GM12878 (cell line): ENCODE measurements at regions of chr3 and their contacts with region 1.

Region 1: GRCh38 chr3:133805527-133806475 is at the start of gene SRPRB:
- DNase-seq: peak; percentile 87
- ATAC-seq: peak; percentile 98
- H3K4me3 ChIP-seq: peak within 1 kb of the TSS; percentile 74
- H3K27ac ChIP-seq: peak within 1 kb of the TSS; percentile 60
- H3K4me1 ChIP-seq: no peaks in the 10 kb centered on the region
- H3K27me3 ChIP-seq: no peaks in the 10 kb centered on the region
- CTCF ChIP-seq: no peak
- EP300 ChIP-seq: 0 out of 4 replicates have a peak, but pooled peaks of 1 of the 2 experiments have one; percentile 8
- POLR2A ChIP-seq: peak; percentile 99
- RAD21 ChIP-seq: no peak
- polyA plus RNA-seq, gene SRPRB: 30.6 to 39.1 TPM

Region 2: GRCh38 chr3:133661454-133662277 is 144.1 kb before region 1 on chr3 and contains the start of gene TOPBP1:
- CTCF ChIA-PET with region 1: no interaction called
- POLR2A ChIA-PET with region 1: no interaction called
- RAD21 ChIA-PET with region 1: no interaction called
- SMC1A ChIA-PET with region 1: no interaction called
- in situ Hi-C with region 1: no loop called
- intact Hi-C with region 1: loop called (anchors 2 kb)
- DNase-seq: no peak
- ATAC-seq: peak; percentile 86
- H3K4me3 ChIP-seq: peak within 1 kb of the TSS; percentile 95
- H3K27ac ChIP-seq: peak within 1 kb of the TSS; percentile 96
- H3K4me1 ChIP-seq: peaks cover 4% of the 10 kb centered on the region; the same call in 1 of the 2 replicates
- H3K27me3 ChIP-seq: no peaks in the 10 kb centered on the region
- CTCF ChIP-seq: no peak
- EP300 ChIP-seq: no peak
- POLR2A ChIP-seq: peak; percentile 92
- RAD21 ChIP-seq: no peak
- polyA plus RNA-seq, gene TOPBP1: 18.3 to 19.9 TPM

Region 3: DNA sequence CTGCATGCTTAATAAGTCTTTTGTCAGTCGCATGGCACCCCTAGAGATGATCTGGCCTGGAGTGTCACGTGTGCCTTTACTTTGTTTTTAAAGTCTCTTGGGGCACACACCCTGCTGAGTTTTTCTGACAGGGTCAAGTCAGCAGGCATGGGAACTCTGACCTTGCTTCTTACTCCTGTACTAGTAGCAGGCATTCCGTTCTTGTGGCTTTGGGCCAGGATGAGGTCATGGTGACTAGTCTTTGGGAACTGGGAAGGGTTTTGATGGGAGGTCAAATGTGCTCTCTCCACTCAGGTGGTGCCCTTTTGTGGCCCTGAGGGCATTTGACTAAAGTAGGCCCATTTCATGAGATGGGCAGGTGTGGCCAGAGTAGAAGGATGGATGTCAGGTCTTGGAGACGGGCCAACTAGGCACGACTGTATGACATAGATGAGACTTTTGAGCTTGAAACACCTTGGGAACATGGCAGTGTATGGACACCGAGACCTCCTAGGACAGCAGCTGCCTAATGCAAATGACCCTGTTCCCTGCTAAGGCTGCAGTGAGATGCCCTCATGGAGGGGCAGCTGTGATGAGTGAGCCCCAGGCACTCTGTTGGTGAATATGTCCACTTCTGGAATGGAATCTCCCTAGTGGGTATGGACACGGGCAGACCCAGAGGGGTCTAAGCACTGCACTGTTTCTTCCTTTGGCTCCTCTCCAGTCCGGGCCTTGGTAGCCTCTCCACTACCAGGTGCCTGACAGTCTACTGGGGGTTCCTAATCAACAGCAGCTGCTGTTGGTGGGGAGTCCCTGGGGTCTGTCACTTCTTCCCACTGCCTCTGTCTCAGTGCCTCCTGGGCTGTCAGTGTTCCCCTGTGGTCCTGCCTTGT is 16.2 kb after region 1 on chr3:
- CTCF ChIA-PET with region 1: interaction called, 24 read pairs
- POLR2A ChIA-PET with region 1: no interaction called
- RAD21 ChIA-PET with region 1: no interaction called
- SMC1A ChIA-PET with region 1: interaction called, 16 read pairs
- in situ Hi-C with region 1: no loop called
- intact Hi-C with region 1: no loop called
- DNase-seq: no peak
- ATAC-seq: peak; percentile 26; the same call in 1 of the 3 replicates
- H3K4me3 ChIP-seq: no peak overlapping the region
- H3K27ac ChIP-seq: no peak overlapping the region
- H3K4me1 ChIP-seq: no peaks in the 10 kb centered on the region
- H3K27me3 ChIP-seq: no peaks in the 10 kb centered on the region
- CTCF ChIP-seq: 0 out of 6 replicates have a peak, but pooled peaks of 2 of the 3 experiments have one; percentile 9 to 17
- EP300 ChIP-seq: no peak
- POLR2A ChIP-seq: peak; percentile 53
- RAD21 ChIP-seq: no peak